ENCODE measurements at regions of chr7 and their contacts with region 1.

Region 1: DNA sequence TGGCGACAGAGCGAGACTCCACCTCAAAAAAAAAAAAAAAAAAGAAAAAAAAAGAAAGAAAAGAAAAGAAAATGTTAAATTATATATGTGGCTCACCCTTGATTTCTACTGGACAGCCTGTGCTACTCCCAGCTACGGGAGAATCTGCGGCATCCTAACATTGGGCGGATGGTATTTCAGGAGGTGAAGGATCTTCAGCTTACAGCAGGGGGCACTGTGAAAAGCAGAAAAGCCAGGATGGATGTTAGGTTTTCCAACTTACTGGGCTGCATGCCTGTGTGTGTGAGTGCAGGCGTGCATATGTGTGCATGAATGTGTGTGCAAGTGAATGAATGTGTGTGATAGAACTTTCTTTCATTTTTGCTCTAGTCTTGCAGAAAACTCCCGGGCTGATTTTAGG is 1066.5 kb downstream of the TYW1 start:
- DNase-seq: peak; percentile 52
- H3K4me3 ChIP-seq: no peak overlapping the region
- H3K27ac ChIP-seq: no peak overlapping the region
- H3K4me1 ChIP-seq: no peaks in the 10 kb centered on the region
- H3K27me3 ChIP-seq: no peaks in the 10 kb centered on the region
- CTCF ChIP-seq: peak; percentile 45
- EP300 ChIP-seq: no peak
- RAD21 ChIP-seq: peak; percentile 66

Region 2: DNA sequence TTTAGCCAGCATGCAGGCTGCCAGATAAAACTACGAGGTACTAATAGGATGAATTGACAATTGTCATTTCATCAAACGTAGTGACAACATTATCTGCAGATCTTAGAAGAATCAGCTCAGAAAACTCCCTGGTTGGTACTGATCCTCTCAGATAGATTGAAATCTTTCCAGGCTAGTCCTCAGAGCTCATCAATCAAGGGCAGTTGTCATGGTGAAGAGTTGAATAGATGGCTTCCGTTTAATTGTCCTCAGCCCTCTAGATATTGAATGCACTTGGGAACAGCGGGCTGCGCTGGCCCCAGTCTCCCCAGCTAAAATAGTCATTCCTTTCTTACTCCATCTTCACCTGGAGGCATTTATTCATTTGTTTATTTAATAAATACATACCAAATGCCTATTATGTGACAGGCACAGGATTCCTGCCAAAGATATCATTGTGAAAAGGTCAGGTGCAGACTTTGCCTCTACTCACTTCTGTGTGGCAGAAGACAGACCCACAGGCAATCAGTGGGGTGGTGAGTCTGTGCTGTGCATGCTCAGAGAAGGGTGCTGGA is 15.1 kb after region 1 on chr7:
- CTCF ChIA-PET with region 1: interaction called, 11 read pairs
- POLR2A ChIA-PET with region 1: no interaction called
- DNase-seq: no peak
- H3K4me3 ChIP-seq: no peak overlapping the region
- H3K27ac ChIP-seq: no peak overlapping the region
- H3K4me1 ChIP-seq: no peaks in the 10 kb centered on the region
- H3K27me3 ChIP-seq: no peaks in the 10 kb centered on the region
- CTCF ChIP-seq: no peak
- EP300 ChIP-seq: no peak
- RAD21 ChIP-seq: no peak

Measured in SK-N-SH (cell line).